ENCODE measurements at regions of chr1 and their contacts with region 1.

Region 1: DNA sequence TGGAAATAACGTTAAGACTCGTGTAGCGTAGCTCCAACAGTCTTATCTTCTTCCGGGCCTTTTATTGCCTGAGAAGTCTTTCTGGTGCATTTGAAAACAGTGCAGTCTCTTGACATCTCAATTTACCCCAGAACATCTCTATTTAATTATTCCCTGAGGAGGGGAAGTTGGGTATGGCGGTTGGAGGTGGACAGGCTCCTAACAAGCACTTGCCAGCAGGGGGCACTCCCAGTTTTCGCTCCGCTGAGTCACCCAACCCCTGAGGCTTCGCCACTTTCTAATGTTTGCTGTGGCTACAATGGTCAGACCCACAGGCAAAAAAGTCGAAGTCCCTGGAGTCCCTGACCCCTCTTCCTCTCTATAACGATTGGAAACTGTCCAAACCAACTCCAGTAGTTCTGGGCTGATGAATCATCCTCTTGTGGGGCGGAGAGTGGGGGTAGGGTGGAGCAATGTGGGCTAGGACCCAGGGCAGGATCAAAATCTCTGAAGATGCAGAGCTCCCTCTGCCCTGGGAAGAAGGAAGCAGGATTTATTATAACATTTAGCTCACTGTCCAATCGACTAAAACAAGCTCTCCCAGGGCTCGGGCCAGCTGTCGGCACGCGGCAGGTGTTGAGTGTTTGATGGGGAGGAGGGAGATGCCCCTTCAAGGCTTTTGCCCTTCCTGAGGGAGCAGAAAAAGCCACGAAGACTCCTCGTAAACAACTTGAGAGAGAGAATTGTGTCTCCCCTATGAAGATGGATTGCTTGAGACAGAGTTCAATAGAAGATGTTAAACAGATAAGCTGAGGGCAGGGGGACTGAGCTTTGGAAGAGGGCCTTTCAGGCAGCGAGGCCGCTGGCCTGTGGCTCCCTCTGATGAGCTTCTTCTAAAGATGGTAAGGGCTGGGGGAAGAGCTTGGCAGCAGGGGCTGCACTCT is 85.7 kb downstream of the BRINP2 start:
- DNase-seq: peak; percentile 47
- H3K4me3 ChIP-seq: no peak overlapping the region
- H3K27ac ChIP-seq: no peak overlapping the region
- H3K4me1 ChIP-seq: no peaks in the 10 kb centered on the region
- H3K27me3 ChIP-seq: no peaks in the 10 kb centered on the region
- CTCF ChIP-seq: peak; percentile 40

Region 2: GRCh38 chr1:177355595-177355994 is 99.2 kb after region 1 on chr1:
- intact Hi-C with region 1: loop called (anchors 5 kb)
- DNase-seq: no peak
- H3K4me3 ChIP-seq: no peak overlapping the region
- H3K27ac ChIP-seq: no peak overlapping the region
- H3K4me1 ChIP-seq: no peaks in the 10 kb centered on the region
- H3K27me3 ChIP-seq: no peaks in the 10 kb centered on the region
- CTCF ChIP-seq: peak; percentile 26

Region 3: DNA sequence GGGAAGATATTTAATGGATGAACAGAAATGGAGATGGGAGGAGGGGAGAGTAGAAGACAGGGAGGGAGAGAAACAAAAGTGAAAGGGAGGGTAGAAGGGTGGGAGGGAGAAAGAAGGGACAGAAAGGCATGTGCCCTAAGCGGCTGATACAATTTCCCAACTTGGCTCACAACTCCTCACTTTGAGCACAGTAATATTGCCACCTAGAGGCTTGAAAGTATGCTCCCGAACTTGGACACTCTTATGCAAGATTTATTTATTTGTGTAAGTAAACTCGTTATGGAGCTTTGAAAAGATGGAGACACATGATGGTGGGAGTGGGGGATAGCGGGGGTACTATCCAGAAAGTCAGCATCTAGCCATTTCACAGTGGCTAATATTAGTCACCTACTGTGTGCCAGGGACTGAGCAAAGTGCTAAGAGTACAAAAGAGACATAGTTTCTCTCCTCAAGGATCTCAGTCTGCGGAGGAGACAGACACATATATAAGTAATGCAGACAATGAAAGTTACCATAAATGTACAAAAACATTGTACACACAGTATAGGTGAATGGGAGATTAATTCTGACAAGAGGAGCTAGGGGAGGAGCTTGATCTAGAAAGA is 523.8 kb after region 1 on chr1:
- intact Hi-C with region 1: loop called (anchors 10 kb)
- DNase-seq: no peak
- H3K4me3 ChIP-seq: no peak overlapping the region
- H3K27ac ChIP-seq: no peak overlapping the region
- H3K4me1 ChIP-seq: no peaks in the 10 kb centered on the region
- H3K27me3 ChIP-seq: no peaks in the 10 kb centered on the region
- CTCF ChIP-seq: peak; percentile 35

Region 4: DNA sequence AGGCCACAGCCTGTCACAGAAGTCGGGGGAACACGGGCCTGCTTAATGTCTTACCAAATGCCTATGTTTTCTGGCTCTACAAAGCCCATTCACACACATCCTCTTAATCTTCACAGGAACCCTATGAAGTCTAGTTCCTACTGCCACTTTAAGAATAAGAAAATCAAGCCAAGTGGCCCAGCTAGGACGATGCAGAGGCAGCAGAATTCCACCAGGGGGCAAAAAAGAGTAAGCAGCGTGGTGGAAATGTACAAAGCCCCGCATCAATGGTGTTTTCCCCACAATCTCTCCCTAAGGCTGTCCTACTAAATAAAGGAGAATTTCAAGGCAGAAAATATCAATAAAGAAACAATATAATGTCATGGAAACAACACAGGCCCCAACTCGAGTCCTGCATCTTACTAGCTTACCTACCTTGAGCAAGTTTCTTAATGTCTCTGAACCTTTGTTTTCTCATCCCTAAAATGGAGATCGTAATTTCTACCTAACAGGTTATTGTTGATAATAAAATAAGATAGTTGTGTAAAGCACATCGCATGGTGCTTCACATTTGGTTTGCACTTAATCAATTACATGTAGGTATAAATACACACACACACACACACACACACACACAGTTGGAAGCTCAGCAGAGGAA is 692.0 kb after region 1 on chr1:
- intact Hi-C with region 1: loop called (anchors 10 kb)
- DNase-seq: peak; percentile 60
- H3K4me3 ChIP-seq: no peak overlapping the region
- H3K27ac ChIP-seq: no peak overlapping the region
- H3K4me1 ChIP-seq: no peaks in the 10 kb centered on the region
- H3K27me3 ChIP-seq: no peaks in the 10 kb centered on the region
- CTCF ChIP-seq: peak; percentile 89

Measured in colonic mucosa (tissue), 4 donors.